ENCODE measurements at regions of chr10 and their contacts with region 1.

Region 1: DNA sequence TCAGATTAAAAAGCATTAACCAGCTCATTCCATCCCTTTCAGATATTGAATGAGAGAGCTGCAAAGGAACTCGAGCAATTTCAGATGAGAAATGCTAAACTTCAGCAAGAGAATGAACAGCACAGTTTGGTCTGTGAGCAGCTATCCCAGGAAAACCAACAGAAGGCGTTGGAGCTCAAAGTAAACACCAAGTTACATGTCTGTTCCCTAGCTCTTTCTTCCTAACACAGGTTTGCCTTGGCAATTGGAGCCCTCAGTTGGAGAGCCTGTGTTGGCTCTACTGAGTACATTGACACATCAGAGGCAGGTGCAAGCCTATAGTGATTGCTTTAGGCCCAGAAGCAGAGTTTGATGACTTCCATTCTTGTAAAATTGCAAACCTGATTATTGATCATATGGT is 14.7 kb downstream of the CFAP58 start:
- DNase-seq: no peak
- H3K4me3 ChIP-seq: no peak overlapping the region
- H3K27ac ChIP-seq: no peak overlapping the region
- H3K4me1 ChIP-seq: peaks cover 0 to 3% (median 1%) of the 10 kb centered on the region in 4 experiments; a peak in 2 of 7 replicates
- H3K27me3 ChIP-seq: no peaks in the 10 kb centered on the region
- CTCF ChIP-seq: no peak
- EP300 ChIP-seq: no peak
- POLR2A ChIP-seq: no peak
- RAD21 ChIP-seq: no peak

Region 2: DNA sequence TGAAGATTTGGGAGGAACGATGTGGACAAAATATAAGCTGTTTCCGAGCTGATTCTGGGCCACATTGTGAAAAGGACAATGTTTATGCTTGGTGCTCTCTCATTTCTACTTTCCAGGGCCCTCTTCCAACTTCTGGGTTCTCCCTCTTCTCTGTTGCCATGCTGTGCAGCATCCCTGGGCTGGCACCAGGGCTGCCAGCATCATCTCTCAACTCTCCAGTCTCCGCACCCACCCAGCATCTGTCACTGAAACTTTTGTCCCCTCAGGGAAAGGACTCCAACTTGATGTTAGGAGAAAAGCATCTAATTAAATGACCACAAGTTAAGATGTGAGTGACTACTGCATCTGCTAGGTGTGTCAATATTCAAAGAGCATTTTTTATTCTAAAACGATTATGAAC is 12.0 kb after region 1 on chr10:
- CTCF ChIA-PET with region 1: interaction called, 13 read pairs
- POLR2A ChIA-PET with region 1: no interaction called
- DNase-seq: no peak
- H3K4me3 ChIP-seq: no peak overlapping the region
- H3K27ac ChIP-seq: no peak overlapping the region
- H3K4me1 ChIP-seq: peaks cover 0 to 5% (median 2%) of the 10 kb centered on the region in 4 experiments; a peak in 2 of 7 replicates
- H3K27me3 ChIP-seq: no peaks in the 10 kb centered on the region
- CTCF ChIP-seq: no peak
- EP300 ChIP-seq: no peak
- POLR2A ChIP-seq: no peak
- RAD21 ChIP-seq: no peak

Measured in H1 (cell line).